ENCODE measurements at regions of chr10 and their contacts with region 1.

Region 1: DNA sequence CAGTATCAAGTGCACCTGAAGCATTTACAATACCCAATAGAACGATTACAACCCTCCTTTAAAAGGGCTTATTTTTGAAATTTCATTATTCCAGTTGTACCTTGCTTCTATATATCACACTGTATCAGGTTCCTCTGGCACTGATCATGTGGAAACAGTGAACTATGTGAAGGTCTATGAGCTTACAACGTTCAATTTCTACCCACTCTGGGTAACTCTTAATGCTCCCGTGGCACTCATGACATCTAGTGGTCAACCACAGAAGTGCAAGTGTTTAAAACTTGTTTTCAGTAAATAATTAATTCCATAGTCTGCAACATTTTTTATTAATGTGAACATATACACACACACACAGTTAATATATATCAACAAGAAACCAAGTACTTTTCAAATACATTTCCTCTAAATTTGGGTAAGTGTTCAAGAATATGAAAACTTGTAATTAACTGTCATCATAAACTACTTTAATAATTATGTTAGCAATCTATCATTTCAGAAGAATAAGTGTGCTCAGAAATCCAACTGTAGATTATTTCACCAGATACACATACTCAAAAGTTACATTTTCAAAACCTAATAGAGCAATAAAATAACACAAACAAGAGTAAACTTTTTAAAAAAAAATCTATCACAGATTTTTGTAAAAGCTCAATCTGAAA is 61.0 kb downstream of the MPP7 start:
- DNase-seq: peak in 1 of 2 donors; percentile 75
- ATAC-seq: peak; percentile 76 to 81 (median 78)
- H3K4me3 ChIP-seq: no peak overlapping the region
- H3K4me3 Mint-ChIP-seq: no peak overlapping the region
- H3K27ac ChIP-seq: no peak overlapping the region
- H3K27ac Mint-ChIP-seq: peak overlapping the region in 1 of 2 donors; percentile 31
- H3K4me1 ChIP-seq: no peaks in the 10 kb centered on the region
- H3K4me1 Mint-ChIP-seq: peaks cover 9 to 11% of the 10 kb centered on the region in 2 donors
- H3K27me3 ChIP-seq: no peaks in the 10 kb centered on the region
- H3K27me3 Mint-ChIP-seq: no peaks in the 10 kb centered on the region
- CTCF ChIP-seq: peak; percentile 95

Region 2: DNA sequence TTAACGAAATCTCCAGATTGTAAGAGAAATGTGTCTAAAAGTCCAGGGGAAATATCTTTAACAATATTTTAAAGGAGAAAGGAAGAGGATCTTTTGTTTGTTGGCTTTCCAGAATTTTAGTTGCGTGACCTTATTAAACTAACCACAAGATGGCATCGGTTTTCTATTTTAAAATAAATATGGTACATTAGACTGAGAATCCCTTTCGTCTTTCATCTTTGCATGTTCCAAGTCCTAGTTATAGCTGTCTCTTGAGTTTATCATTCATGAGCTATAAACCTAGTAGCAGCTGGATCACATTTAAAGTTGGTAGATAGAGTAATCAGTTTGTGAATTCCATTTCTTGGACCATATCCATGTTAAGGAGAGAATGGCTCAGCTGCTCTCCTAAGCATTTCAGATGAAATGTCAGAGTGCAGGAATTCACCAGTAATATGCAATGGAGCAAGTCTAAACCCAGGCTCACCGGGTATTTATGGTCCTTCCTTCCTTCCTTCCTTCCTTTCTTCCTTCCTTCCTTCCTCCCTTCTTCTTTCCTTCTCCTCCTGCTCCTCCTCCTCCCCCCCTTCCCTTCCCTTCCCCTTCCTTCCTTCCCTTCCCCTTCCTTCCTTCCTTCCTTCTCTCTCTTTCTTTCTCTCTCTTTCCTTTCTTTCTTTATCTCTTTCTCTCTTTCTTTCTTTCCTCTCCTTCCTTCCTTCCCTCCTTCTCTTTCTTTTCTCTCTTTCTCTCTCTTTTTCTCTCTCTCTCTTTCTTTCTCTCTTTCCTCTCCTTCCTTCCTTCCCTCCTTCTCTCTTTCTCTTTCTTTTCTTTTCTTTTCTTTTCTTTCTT is 795.6 kb before region 1 on chr10:
- intact Hi-C with region 1: loop called (anchors 5 kb)
- DNase-seq: peak in 1 of 2 donors; percentile 61
- ATAC-seq: peak in 1 of 3 donors; percentile 55
- H3K4me3 ChIP-seq: no peak overlapping the region
- H3K4me3 Mint-ChIP-seq: no peak overlapping the region
- H3K27ac ChIP-seq: no peak overlapping the region
- H3K27ac Mint-ChIP-seq: no peak overlapping the region
- H3K4me1 ChIP-seq: peaks cover 4% of the 10 kb centered on the region
- H3K4me1 Mint-ChIP-seq: peaks cover 0 to 6% of the 10 kb centered on the region in 2 donors
- H3K27me3 ChIP-seq: no peaks in the 10 kb centered on the region
- H3K27me3 Mint-ChIP-seq: no peaks in the 10 kb centered on the region
- CTCF ChIP-seq: no peak

Region 3: DNA sequence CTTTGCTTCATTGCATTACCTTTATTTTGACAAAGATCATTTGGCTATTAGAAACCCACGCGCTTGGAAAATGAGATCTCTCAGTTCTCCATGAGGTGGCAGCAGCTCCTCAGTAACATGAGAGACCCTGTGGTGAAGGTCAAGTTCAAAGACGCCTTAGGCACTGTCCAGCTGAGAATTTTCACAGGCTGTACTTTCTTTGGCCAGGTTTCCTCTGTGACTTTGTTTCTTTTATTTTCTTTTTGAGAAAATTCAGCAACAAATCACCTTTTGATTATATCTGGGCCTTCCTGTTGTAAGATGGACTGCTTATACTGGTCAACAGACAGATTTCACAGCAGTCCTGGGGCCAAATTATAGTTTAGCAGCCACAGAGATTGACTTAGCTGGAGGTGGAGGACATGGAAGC is 683.3 kb before region 1 on chr10:
- intact Hi-C with region 1: loop called (anchors 5 kb)
- DNase-seq: peak in 1 of 2 donors; percentile 65
- ATAC-seq: peak in 2 of 3 donors; percentile 70 to 74
- H3K4me3 ChIP-seq: no peak overlapping the region
- H3K4me3 Mint-ChIP-seq: no peak overlapping the region
- H3K27ac ChIP-seq: no peak overlapping the region
- H3K27ac Mint-ChIP-seq: no peak overlapping the region
- H3K4me1 ChIP-seq: no peaks in the 10 kb centered on the region
- H3K4me1 Mint-ChIP-seq: peaks cover 0 to 7% of the 10 kb centered on the region in 2 donors
- H3K27me3 ChIP-seq: no peaks in the 10 kb centered on the region
- H3K27me3 Mint-ChIP-seq: no peaks in the 10 kb centered on the region
- CTCF ChIP-seq: peak; percentile 72

Region 4: GRCh38 chr10:27742195-27743011 is 499.5 kb before region 1 on chr10:
- intact Hi-C with region 1: loop called (anchors 2 kb)
- DNase-seq: peak; percentile 59 to 81
- ATAC-seq: peak; percentile 81 to 94 (median 90)
- H3K4me3 ChIP-seq: peak overlapping the region; percentile 44
- H3K4me3 Mint-ChIP-seq: peak overlapping the region; percentile 80
- H3K27ac ChIP-seq: no peak overlapping the region
- H3K27ac Mint-ChIP-seq: no peak overlapping the region
- H3K4me1 ChIP-seq: peaks cover 47% of the 10 kb centered on the region
- H3K4me1 Mint-ChIP-seq: peaks cover 19 to 21% of the 10 kb centered on the region in 2 donors
- H3K27me3 ChIP-seq: peaks cover 48% of the 10 kb centered on the region
- H3K27me3 Mint-ChIP-seq: peaks cover 57% of the 10 kb centered on the region in 2 donors
- CTCF ChIP-seq: peak; percentile 71

Region 5: DNA sequence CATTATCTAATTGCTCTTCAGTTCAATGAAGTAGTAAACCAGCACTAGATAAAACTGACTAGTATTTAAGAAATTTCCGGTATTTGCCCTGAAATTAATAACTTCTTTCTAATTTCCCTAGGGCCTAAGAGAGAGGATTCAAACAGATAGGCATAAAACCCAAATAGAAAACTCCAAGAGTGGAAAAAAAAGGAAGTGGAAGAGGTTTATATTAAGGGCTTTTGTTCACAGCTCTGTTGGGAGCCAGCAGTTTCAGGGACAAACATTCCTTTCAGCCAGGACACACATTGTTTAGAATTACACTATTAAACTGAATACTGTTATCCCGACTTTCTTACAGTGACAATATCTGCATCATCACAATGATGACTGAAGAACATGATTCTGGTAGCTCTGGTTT is 246.6 kb before region 1 on chr10:
- intact Hi-C with region 1: no loop called
- DNase-seq: no peak
- ATAC-seq: no peak
- H3K4me3 ChIP-seq: no peak overlapping the region
- H3K4me3 Mint-ChIP-seq: no peak overlapping the region
- H3K27ac ChIP-seq: no peak overlapping the region
- H3K27ac Mint-ChIP-seq: no peak overlapping the region
- H3K4me1 ChIP-seq: peaks cover 11% of the 10 kb centered on the region
- H3K4me1 Mint-ChIP-seq: peaks cover 12 to 17% of the 10 kb centered on the region in 2 donors
- H3K27me3 ChIP-seq: peaks cover 18% of the 10 kb centered on the region
- H3K27me3 Mint-ChIP-seq: peaks cover 37 to 57% of the 10 kb centered on the region in 2 donors
- CTCF ChIP-seq: no peak

Region 6: DNA sequence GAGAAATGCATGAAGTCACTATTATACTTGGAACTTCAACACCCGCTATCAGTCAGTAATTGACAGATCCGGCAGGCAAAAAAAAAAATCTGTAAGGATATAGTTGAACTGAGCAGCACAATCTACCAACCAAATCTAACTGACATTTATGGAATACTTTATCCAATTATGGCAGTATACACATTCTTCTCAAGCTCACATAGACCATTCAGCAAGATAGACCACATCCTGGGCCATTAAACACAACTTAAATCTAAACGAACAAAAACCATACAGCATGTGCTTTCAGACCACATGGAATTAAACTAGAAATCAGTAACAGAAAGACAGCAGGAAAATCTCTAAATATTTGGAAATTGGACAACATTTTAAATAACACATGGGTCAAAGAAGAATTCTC is 51.7 kb before region 1 on chr10:
- intact Hi-C with region 1: no loop called
- DNase-seq: no peak
- ATAC-seq: no peak
- H3K4me3 ChIP-seq: no peak overlapping the region
- H3K4me3 Mint-ChIP-seq: no peak overlapping the region
- H3K27ac ChIP-seq: no peak overlapping the region
- H3K27ac Mint-ChIP-seq: no peak overlapping the region
- H3K4me1 ChIP-seq: no peaks in the 10 kb centered on the region
- H3K4me1 Mint-ChIP-seq: peaks cover 10 to 11% of the 10 kb centered on the region in 2 donors
- H3K27me3 ChIP-seq: no peaks in the 10 kb centered on the region
- H3K27me3 Mint-ChIP-seq: no peaks in the 10 kb centered on the region
- CTCF ChIP-seq: no peak

Measured in natural killer cell (primary cell).